Aorta (tissue), 5 donors: ENCODE measurements at regions of chr7 and their contacts with region 1.

Region 1: GRCh38 chr7:143240291-143241168 is 18.7 kb downstream of the TAS2R40 start:
- DNase-seq: peak in 1 of 2 donors; percentile 70
- ATAC-seq: peak; percentile 92
- H3K4me3 ChIP-seq: no peak overlapping the region
- H3K27ac ChIP-seq: no peak overlapping the region
- H3K4me1 ChIP-seq: no peaks in the 10 kb centered on the region
- H3K27me3 ChIP-seq: no peaks in the 10 kb centered on the region

Region 2: DNA sequence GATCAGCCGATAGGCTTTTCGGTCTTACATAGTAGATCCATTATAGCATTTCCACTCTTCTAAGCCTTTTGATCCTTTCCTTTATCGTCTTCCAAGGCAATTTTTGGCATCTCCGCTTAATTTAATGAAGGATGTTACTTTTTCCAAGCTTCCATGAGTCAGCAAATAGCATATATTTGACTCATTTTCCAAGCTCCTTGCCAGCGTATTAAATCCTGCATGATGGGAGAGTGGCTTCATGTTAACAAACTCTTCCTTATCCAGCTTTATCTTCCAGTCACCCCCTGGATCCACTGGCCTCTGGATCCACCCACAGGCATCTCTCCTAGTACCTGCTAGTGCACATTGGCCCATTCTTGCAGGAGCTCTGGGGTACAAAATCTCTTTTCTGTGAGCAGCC is 226.6 kb before region 1 on chr7:
- intact Hi-C with region 1: no loop called
- DNase-seq: no peak
- ATAC-seq: no peak
- H3K4me3 ChIP-seq: no peak overlapping the region
- H3K27ac ChIP-seq: no peak overlapping the region
- H3K4me1 ChIP-seq: peaks cover 0 to 4% of the 10 kb centered on the region in 2 donors
- H3K27me3 ChIP-seq: no peaks in the 10 kb centered on the region

Region 3: GRCh38 chr7:143147072-143147694 is 93.3 kb before region 1 on chr7:
- intact Hi-C with region 1: no loop called
- DNase-seq: no peak
- ATAC-seq: no peak
- H3K4me3 ChIP-seq: no peak overlapping the region
- H3K27ac ChIP-seq: no peak overlapping the region
- H3K4me1 ChIP-seq: no peaks in the 10 kb centered on the region
- H3K27me3 ChIP-seq: no peaks in the 10 kb centered on the region

Region 4: DNA sequence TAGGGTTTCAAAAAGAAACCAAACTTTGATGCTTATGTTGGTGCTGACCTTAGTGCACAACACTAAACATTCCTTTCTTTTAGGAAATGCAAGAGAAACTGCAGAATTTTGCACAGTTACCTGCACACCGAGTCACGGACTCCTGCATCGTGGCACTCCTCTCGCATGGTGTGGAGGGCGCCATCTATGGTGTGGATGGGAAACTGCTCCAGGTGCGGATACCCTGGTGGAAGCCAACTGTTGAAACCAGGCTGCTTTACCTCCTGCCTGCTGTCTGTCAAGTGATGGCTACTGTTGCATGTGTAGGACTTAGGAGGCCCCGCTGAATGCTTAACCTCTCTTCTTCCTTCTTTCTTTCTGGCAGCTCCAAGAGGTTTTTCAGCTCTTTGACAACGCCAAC is 59.3 kb after region 1 on chr7:
- intact Hi-C with region 1: loop called (anchors 2 to 5 kb)
- DNase-seq: no peak
- ATAC-seq: no peak
- H3K4me3 ChIP-seq: no peak overlapping the region
- H3K27ac ChIP-seq: no peak overlapping the region
- H3K4me1 ChIP-seq: peaks cover 0 to 3% of the 10 kb centered on the region in 2 donors
- H3K27me3 ChIP-seq: no peaks in the 10 kb centered on the region

Region 5: GRCh38 chr7:143305423-143306070 is 65.0 kb after region 1 on chr7:
- intact Hi-C with region 1: loop called (anchors 2 to 5 kb)
- DNase-seq: peak; percentile 71 to 88
- ATAC-seq: peak; percentile 62
- H3K4me3 ChIP-seq: no peak overlapping the region
- H3K27ac ChIP-seq: no peak overlapping the region
- H3K4me1 ChIP-seq: no peaks in the 10 kb centered on the region
- H3K27me3 ChIP-seq: no peaks in the 10 kb centered on the region

Region 6: DNA sequence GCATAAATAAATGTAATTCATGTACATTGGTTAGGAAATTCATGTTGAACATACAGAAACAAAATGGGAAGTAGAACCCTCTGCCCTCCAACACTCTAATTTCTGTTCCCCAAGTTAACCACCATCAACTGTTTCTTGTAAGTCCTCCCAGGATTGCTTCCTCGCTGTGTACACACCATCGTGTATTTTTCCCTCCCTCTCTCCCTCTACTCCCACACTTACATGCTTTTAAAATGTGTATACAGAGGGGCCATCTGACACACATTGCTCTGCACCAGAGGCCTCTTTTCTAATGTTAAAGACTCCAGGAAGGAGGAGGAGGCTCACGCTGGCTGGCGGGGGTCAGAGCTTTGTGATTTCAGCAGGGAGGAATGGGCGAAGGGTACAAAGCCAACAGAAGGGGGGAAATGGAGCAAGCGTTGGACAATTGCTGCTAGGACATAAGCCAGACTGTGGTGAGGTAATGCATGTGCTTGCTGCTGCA is 170.0 kb after region 1 on chr7:
- intact Hi-C with region 1: loop called in 1 of 2 experiments (anchors 2 kb)
- DNase-seq: peak in 1 of 2 donors; percentile 78
- ATAC-seq: peak; percentile 48
- H3K4me3 ChIP-seq: no peak overlapping the region
- H3K27ac ChIP-seq: no peak overlapping the region
- H3K4me1 ChIP-seq: no peaks in the 10 kb centered on the region
- H3K27me3 ChIP-seq: no peaks in the 10 kb centered on the region

Region 7: GRCh38 chr7:143416565-143417149 is 176.1 kb after region 1 on chr7:
- intact Hi-C with region 1: loop called (anchors 2 kb)
- DNase-seq: no peak
- ATAC-seq: peak; percentile 78
- H3K4me3 ChIP-seq: no peak overlapping the region
- H3K27ac ChIP-seq: no peak overlapping the region
- H3K4me1 ChIP-seq: no peaks in the 10 kb centered on the region
- H3K27me3 ChIP-seq: no peaks in the 10 kb centered on the region

Region 8: DNA sequence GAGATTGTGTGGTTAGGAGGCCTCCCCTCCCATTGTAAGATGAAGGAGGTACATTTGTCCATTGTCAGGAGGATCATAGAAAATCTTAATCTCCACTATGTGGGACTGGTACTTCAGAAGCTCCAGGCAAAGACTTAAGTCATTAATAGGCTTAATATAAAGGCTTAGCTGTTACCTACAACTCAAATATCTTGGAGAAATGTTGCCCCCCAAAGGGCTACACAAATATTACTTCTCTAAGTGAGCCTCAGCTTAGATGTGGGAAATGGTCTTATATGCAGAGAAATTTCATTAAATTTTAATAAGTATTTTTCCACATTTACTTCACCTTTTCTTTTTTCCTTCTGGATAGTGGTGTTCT is 264.4 kb after region 1 on chr7:
- intact Hi-C with region 1: loop called in 1 of 2 experiments (anchors 10 kb)
- DNase-seq: no peak
- ATAC-seq: no peak
- H3K4me3 ChIP-seq: no peak overlapping the region
- H3K27ac ChIP-seq: no peak overlapping the region
- H3K4me1 ChIP-seq: no peaks in the 10 kb centered on the region
- H3K27me3 ChIP-seq: no peaks in the 10 kb centered on the region